HepG2 (cell line): ENCODE measurements at regions of chr10 and their contacts with region 1.

Region 1: DNA sequence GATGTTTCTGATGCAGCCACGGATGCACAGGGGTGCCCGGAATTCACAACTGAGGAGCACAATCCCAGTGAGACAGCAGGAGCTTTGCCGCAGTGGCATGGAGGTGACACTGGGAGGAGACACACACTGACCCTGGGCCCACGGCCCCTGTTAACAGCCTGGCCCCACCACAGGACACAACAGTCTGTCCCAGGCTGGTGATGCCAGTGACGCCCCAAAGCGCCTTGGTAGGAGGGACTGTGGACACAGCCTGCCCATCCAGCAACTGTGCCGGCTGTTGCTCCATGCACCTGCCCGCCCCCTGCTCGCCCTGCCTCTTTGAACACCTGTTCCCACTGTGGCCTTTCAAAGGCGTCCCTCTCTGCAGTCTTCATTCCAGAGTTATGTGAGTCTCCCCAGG is 49.8 kb downstream of the KLF6 start:
- DNase-seq: peak; percentile 40
- ATAC-seq: peak; percentile 99
- H3K4me3 ChIP-seq: no peak overlapping the region; a peak in 1 of 6 replicates
- H3K27ac ChIP-seq: no peak overlapping the region
- H3K4me1 ChIP-seq: peaks cover 32% of the 10 kb centered on the region
- H3K27me3 ChIP-seq: peaks cover 0 to 8% of the 10 kb centered on the region in 2 experiments; a peak in 2 of 5 replicates
- CTCF ChIP-seq: peak; percentile 92
- EP300 ChIP-seq: no peak
- POLR2A ChIP-seq: no peak
- RAD21 ChIP-seq: peak; percentile 71

Region 2: DNA sequence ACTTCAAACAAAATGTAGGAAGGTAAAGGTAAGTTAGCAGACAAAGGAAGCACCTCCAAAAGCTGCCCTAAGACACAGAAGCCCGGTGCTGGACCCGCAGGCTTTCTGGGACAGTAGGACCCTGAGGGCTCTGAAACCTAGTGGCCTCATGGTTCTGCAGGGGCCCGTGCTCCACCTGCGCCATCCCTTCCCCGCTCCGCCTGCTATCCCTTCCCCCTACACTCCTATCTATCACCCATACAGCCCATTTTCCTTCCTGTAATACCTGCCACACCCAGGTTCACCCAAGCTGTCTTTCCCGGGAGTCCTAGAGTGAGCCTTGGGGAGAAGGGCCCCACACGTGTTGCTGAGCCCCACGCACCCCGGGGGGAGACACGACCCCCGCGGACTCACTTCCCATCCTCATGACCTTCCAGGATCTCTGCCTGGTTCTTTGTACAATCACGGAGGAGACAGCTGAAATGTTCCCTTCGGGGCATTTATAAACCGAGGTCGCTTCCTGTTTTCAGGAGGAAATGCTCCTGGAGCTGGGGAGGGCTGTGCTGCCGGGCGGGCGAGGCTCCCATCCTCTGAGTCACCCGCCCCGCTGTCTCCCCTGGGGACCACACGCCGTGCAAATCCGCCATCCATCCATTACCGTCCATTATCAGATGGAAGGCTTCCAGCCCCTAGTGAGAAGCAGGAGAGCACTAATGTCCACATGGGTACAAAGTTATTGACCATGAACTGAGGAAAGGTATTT is 310.9 kb before region 1 on chr10:
- CTCF ChIA-PET with region 1: no interaction called
- POLR2A ChIA-PET with region 1: no interaction called
- in situ Hi-C with region 1: no loop called
- intact Hi-C with region 1: no loop called
- DNase-seq: no peak
- ATAC-seq: no peak
- H3K4me3 ChIP-seq: no peak overlapping the region
- H3K27ac ChIP-seq: no peak overlapping the region
- H3K4me1 ChIP-seq: peaks cover 17% of the 10 kb centered on the region
- H3K27me3 ChIP-seq: peaks cover 0 to 38% of the 10 kb centered on the region in 2 experiments; a peak in 3 of 5 replicates
- CTCF ChIP-seq: no peak
- EP300 ChIP-seq: no peak
- POLR2A ChIP-seq: no peak
- RAD21 ChIP-seq: no peak

Region 3: GRCh38 chr10:3776796-3777571 is 41.8 kb after region 1 on chr10:
- CTCF ChIA-PET with region 1: no interaction called
- POLR2A ChIA-PET with region 1: interaction called, 3 read pairs
- in situ Hi-C with region 1: no loop called
- intact Hi-C with region 1: loop called (anchors 2 kb)
- DNase-seq: peak; percentile 58
- ATAC-seq: no peak
- H3K4me3 ChIP-seq: no peak overlapping the region
- H3K27ac ChIP-seq: no peak overlapping the region
- H3K4me1 ChIP-seq: peaks cover 42% of the 10 kb centered on the region
- H3K27me3 ChIP-seq: no peaks in the 10 kb centered on the region; a peak in 1 of 5 replicates
- CTCF ChIP-seq: no peak
- EP300 ChIP-seq: peak in 1 of 2 experiments; percentile 22; a peak in 1 of 4 replicates
- POLR2A ChIP-seq: peak in 1 of 2 experiments; percentile 60; a peak in 2 of 4 replicates
- RAD21 ChIP-seq: no peak